ENCODE measurements at regions of chr3 and their contacts with region 1.

Region 1: GRCh38 chr3:53709860-53710674 is 136.2 kb downstream of the CHDH start:
- ATAC-seq: peak; percentile 68 to 97 (median 95)
- H3K4me3 ChIP-seq: no peak overlapping the region
- H3K27ac ChIP-seq: no peak overlapping the region
- H3K4me1 ChIP-seq: peaks cover under 1 to 8% of the 10 kb centered on the region in 2 donors

Region 2: GRCh38 chr3:53287131-53287629 is 422.9 kb before region 1 on chr3:
- in situ Hi-C with region 1: loop called in 2 of 9 experiments (anchors 25 kb)
- ATAC-seq: peak in 7 of 8 experiments; percentile 63 to 94 (median 90)
- H3K4me3 ChIP-seq: no peak overlapping the region
- H3K27ac ChIP-seq: peak overlapping the region in 1 of 2 donors; percentile 77
- H3K4me1 ChIP-seq: peaks cover 6 to 25% of the 10 kb centered on the region in 2 donors

Region 3: GRCh38 chr3:53320697-53321096 is 389.4 kb before region 1 on chr3:
- in situ Hi-C with region 1: loop called in 1 of 9 experiments (anchors 25 kb)
- ATAC-seq: no peak
- H3K4me3 ChIP-seq: no peak overlapping the region
- H3K27ac ChIP-seq: no peak overlapping the region
- H3K4me1 ChIP-seq: no peaks in the 10 kb centered on the region

Region 4: GRCh38 chr3:53375019-53375418 is 335.0 kb before region 1 on chr3:
- in situ Hi-C with region 1: loop called in 3 of 9 experiments (anchors 10 to 25 kb)
- ATAC-seq: peak in 5 of 8 experiments; percentile 37 to 99 (median 97)
- H3K4me3 ChIP-seq: no peak overlapping the region
- H3K27ac ChIP-seq: no peak overlapping the region
- H3K4me1 ChIP-seq: peaks cover 8 to 9% of the 10 kb centered on the region in 2 donors

Measured in motor neuron (in vitro differentiated cells).